PC-3 (cell line): ENCODE measurements at regions of chr10 and their contacts with region 1.

Region 1: DNA sequence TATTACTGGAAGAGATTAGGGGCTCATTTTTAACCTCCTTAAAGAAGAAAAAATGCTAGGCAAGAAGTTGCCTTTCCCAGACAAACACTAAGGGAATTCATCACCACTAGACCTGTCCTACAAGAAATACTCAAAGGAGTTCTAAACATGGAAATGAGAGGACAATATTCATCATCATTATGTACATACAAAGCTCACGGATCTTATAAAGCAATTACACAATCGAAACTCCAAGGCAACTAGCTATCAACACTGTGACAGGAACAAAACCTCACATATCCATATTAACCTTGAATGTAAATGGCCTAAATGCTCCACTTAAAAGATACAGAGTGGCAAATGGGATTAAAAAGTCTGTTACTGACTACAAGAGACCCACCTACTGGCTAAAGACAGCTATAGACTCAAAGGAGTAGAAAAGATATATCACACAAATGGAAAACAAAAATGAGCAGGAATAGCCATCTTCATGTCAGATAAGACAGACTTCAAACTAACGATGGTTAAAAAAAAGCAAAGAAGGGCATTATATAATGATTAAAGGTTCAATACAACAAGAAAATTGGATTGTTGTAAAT is 246.6 kb downstream of the ADRA2A start:
- DNase-seq: peak; percentile 2
- ATAC-seq: no peak
- H3K4me3 ChIP-seq: no peak overlapping the region
- H3K27ac ChIP-seq: no peak overlapping the region
- H3K4me1 ChIP-seq: no peaks in the 10 kb centered on the region
- H3K27me3 ChIP-seq: no peaks in the 10 kb centered on the region
- CTCF ChIP-seq: peak; percentile 38; the same call in 1 of the 2 replicates

Region 2: GRCh38 chr10:111076191-111076681 is 247.2 kb before region 1 on chr10:
- CTCF ChIA-PET with region 1: no interaction called
- POLR2A ChIA-PET with region 1: no interaction called
- intact Hi-C with region 1: loop called (anchors 5 kb)
- DNase-seq: peak; percentile 44
- ATAC-seq: peak; percentile 70
- H3K4me3 ChIP-seq: peak overlapping the region; percentile 68
- H3K27ac ChIP-seq: no peak overlapping the region
- H3K4me1 ChIP-seq: peaks cover 5% of the 10 kb centered on the region
- H3K27me3 ChIP-seq: peaks cover 34% of the 10 kb centered on the region
- CTCF ChIP-seq: peak; percentile 76

Region 3: GRCh38 chr10:111207500-111207899 is 116.0 kb before region 1 on chr10:
- CTCF ChIA-PET with region 1: no interaction called
- POLR2A ChIA-PET with region 1: no interaction called
- intact Hi-C with region 1: no loop called
- DNase-seq: no peak
- ATAC-seq: no peak
- H3K4me3 ChIP-seq: no peak overlapping the region
- H3K27ac ChIP-seq: no peak overlapping the region
- H3K4me1 ChIP-seq: peaks cover 5% of the 10 kb centered on the region; the same call in 1 of the 2 replicates
- H3K27me3 ChIP-seq: no peaks in the 10 kb centered on the region
- CTCF ChIP-seq: no peak